ENCODE measurements at regions of chr12 and their contacts with region 1.

Region 1: GRCh38 chr12:85872497-85873091 is 1.5 kb upstream of the NTS start:
- DNase-seq: peak; percentile 66
- H3K4me3 ChIP-seq: no peak overlapping the region
- H3K27ac ChIP-seq: no peak overlapping the region
- H3K4me1 ChIP-seq: no peaks in the 10 kb centered on the region
- H3K27me3 ChIP-seq: no peaks in the 10 kb centered on the region
- CTCF ChIP-seq: peak; percentile 46 to 52
- POLR2A ChIP-seq: no peak

Region 2: GRCh38 chr12:85468356-85469157 is 404.0 kb before region 1 on chr12:
- CTCF ChIA-PET with region 1: interaction called, 153 read pairs
- POLR2A ChIA-PET with region 1: no interaction called
- dilution Hi-C with region 1: no loop called
- intact Hi-C with region 1: loop called (anchors 1 kb)
- DNase-seq: peak; percentile 80
- H3K4me3 ChIP-seq: peak overlapping the region in 2 of 3 experiments; percentile 41 to 67
- H3K27ac ChIP-seq: no peak overlapping the region
- H3K4me1 ChIP-seq: no peaks in the 10 kb centered on the region
- H3K27me3 ChIP-seq: peaks cover 0 to 2% of the 10 kb centered on the region in 2 experiments
- CTCF ChIP-seq: peak; percentile 64 to 69
- POLR2A ChIP-seq: no peak

Region 3: GRCh38 chr12:85476756-85477155 is 395.8 kb before region 1 on chr12:
- CTCF ChIA-PET with region 1: interaction called, 57 read pairs
- POLR2A ChIA-PET with region 1: no interaction called
- dilution Hi-C with region 1: no loop called
- intact Hi-C with region 1: loop called (anchors 1 kb)
- DNase-seq: no peak
- H3K4me3 ChIP-seq: no peak overlapping the region
- H3K27ac ChIP-seq: no peak overlapping the region
- H3K4me1 ChIP-seq: no peaks in the 10 kb centered on the region
- H3K27me3 ChIP-seq: no peaks in the 10 kb centered on the region
- CTCF ChIP-seq: no peak
- POLR2A ChIP-seq: no peak

Region 4: DNA sequence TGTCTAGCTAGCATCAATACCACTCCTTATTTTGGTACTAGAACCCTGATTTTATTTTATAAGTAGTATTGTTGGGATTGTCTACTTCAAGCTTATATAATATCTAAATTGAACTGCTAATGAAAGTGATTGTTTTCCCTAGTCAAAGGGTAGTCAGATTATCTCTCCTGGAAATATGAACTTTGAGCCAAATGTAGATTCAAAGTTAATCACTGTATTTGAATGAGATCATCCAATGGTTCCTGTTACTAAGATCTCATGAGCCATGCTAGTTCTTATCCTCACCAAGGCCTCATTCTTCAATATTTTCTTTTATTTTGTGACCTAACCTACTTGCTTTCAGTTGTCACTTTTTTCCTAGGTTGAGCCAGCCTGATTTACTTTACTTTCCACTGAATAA is 313.1 kb before region 1 on chr12:
- CTCF ChIA-PET with region 1: interaction called, 15 read pairs
- POLR2A ChIA-PET with region 1: no interaction called
- dilution Hi-C with region 1: no loop called
- intact Hi-C with region 1: no loop called
- DNase-seq: no peak
- H3K4me3 ChIP-seq: no peak overlapping the region
- H3K27ac ChIP-seq: no peak overlapping the region
- H3K4me1 ChIP-seq: no peaks in the 10 kb centered on the region
- H3K27me3 ChIP-seq: no peaks in the 10 kb centered on the region
- CTCF ChIP-seq: no peak
- POLR2A ChIP-seq: no peak

Region 5: GRCh38 chr12:85883763-85884162 is 11.2 kb after region 1 on chr12:
- CTCF ChIA-PET with region 1: interaction called, 15 read pairs
- POLR2A ChIA-PET with region 1: interaction called, 4 read pairs
- dilution Hi-C with region 1: no loop called
- intact Hi-C with region 1: no loop called
- DNase-seq: no peak
- H3K4me3 ChIP-seq: no peak overlapping the region
- H3K27ac ChIP-seq: no peak overlapping the region
- H3K4me1 ChIP-seq: no peaks in the 10 kb centered on the region
- H3K27me3 ChIP-seq: no peaks in the 10 kb centered on the region
- CTCF ChIP-seq: no peak
- POLR2A ChIP-seq: no peak

Measured in endothelial cell of umbilical vein (primary cell).